Naive thymus-derived CD4-positive, alpha-beta T cell (primary cell): ENCODE measurements at regions of chr11 and their contacts with region 1.

Region 1: GRCh38 chr11:72085621-72086351 is 5.1 kb downstream of the LRRC51 start:
- DNase-seq: no peak
- ATAC-seq: no peak
- H3K4me3 ChIP-seq: no peak overlapping the region
- H3K4me3 Mint-ChIP-seq: no peak overlapping the region
- H3K27ac ChIP-seq: no peak overlapping the region
- H3K27ac Mint-ChIP-seq: peak overlapping the region in 8 of 9 donors; percentile 58 to 83 (median 76)
- H3K4me1 ChIP-seq: peaks cover 0 to 9% of the 10 kb centered on the region in 2 donors
- H3K4me1 Mint-ChIP-seq: peaks cover 12 to 33% (median 24%) of the 10 kb centered on the region in 7 donors
- H3K27me3 ChIP-seq: no peaks in the 10 kb centered on the region
- H3K27me3 Mint-ChIP-seq: no peaks in the 10 kb centered on the region

Region 2: GRCh38 chr11:72102946-72103753 is 17.4 kb after region 1 on chr11 and contains the start of gene LAMTOR1:
- CTCF ChIA-PET with region 1: interaction called, 18 read pairs
- POLR2A ChIA-PET with region 1: interaction called, 25 read pairs
- intact Hi-C with region 1: loop called (anchors 1 kb)
- DNase-seq: peak; percentile 87 to 98 (median 95)
- ATAC-seq: peak; percentile 98
- H3K4me3 ChIP-seq: peak within 1 kb of the TSS; percentile 54
- H3K4me3 Mint-ChIP-seq: peak within 1 kb of the TSS; percentile 66 to 97 (median 86)
- H3K27ac ChIP-seq: peak within 1 kb of the TSS; percentile 93
- H3K27ac Mint-ChIP-seq: peak within 1 kb of the TSS; percentile 83 to 98 (median 94)
- H3K4me1 ChIP-seq: peaks cover 20% of the 10 kb centered on the region in 2 donors
- H3K4me1 Mint-ChIP-seq: peaks cover 37 to 49% (median 44%) of the 10 kb centered on the region in 7 donors
- H3K27me3 ChIP-seq: no peaks in the 10 kb centered on the region
- H3K27me3 Mint-ChIP-seq: no peaks in the 10 kb centered on the region
- total RNA-seq, gene LAMTOR1: 41.8 to 83.0 (median 69.7) TPM

Region 3: GRCh38 chr11:72157126-72157525 is 71.3 kb after region 1 on chr11:
- CTCF ChIA-PET with region 1: no interaction called
- POLR2A ChIA-PET with region 1: no interaction called
- intact Hi-C with region 1: no loop called
- DNase-seq: no peak
- ATAC-seq: no peak
- H3K4me3 ChIP-seq: no peak overlapping the region
- H3K4me3 Mint-ChIP-seq: no peak overlapping the region
- H3K27ac ChIP-seq: no peak overlapping the region
- H3K27ac Mint-ChIP-seq: no peak overlapping the region
- H3K4me1 ChIP-seq: no peaks in the 10 kb centered on the region
- H3K4me1 Mint-ChIP-seq: no peaks in the 10 kb centered on the region
- H3K27me3 ChIP-seq: no peaks in the 10 kb centered on the region
- H3K27me3 Mint-ChIP-seq: peaks cover 13 to 28% (median 15%) of the 10 kb centered on the region in 5 donors

Region 4: GRCh38 chr11:72573072-72573854 is 487.5 kb after region 1 on chr11:
- CTCF ChIA-PET with region 1: no interaction called
- POLR2A ChIA-PET with region 1: no interaction called
- intact Hi-C with region 1: no loop called
- DNase-seq: peak in 3 of 9 donors; percentile 7 to 29 (median 16)
- ATAC-seq: peak; percentile 73
- H3K4me3 ChIP-seq: no peak overlapping the region
- H3K4me3 Mint-ChIP-seq: peak overlapping the region in 1 of 10 donors; percentile 8
- H3K27ac ChIP-seq: no peak overlapping the region
- H3K27ac Mint-ChIP-seq: peak overlapping the region in 1 of 9 donors; percentile 11
- H3K4me1 ChIP-seq: no peaks in the 10 kb centered on the region
- H3K4me1 Mint-ChIP-seq: peaks cover 0 to 18% (median 0%) of the 10 kb centered on the region in 7 donors
- H3K27me3 ChIP-seq: no peaks in the 10 kb centered on the region
- H3K27me3 Mint-ChIP-seq: peaks cover 5 to 19% (median 13%) of the 10 kb centered on the region in 5 donors

Region 5: DNA sequence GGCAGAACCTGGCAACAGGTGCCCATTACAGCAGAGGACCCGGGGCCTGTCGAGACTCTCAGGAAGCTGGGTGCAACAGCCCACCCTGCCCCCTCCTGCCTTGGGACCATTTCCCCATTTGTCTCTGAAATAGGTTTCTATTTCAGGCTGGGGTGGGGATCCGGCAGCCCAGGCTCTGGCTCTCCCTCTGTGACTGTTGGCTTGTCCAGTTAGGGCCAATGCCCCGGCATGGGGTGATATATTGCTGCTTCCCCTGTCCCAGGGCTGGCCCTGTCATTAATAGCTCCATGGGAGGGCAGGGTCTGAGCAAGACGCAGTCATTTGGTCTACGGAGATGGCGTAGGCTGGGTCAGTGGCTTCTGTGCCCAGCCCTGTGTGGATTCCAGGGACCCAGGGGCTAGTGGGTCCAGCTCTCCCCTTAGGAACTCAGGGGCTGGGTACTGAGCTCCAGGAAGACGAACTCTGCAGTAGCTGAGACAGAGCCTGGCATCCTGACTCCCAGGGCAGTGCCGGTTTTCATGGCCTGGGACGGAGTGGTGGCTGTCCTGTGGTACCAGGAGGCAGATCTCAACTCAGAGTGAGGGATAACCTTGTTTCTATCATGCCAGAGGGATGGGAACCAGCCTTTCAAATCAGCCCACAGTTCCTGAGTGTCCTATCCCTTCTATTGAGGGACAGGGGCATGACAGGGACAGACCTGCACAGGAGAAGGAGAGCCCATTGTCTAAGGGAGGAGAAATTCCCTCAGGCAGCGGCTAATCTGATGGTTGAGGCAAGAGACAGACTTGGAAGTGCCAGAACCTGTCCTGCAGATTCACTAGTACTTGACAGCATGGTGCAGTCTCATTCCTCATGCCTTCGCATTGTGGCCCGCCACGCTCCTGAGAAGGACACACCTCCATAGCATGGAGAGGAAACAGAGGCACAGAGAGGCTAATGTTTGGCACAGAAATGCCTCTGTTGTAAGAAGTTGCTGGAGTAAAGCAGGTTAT is 1189.3 kb after region 1 on chr11:
- CTCF ChIA-PET with region 1: no interaction called
- POLR2A ChIA-PET with region 1: no interaction called
- intact Hi-C with region 1: no loop called
- DNase-seq: no peak
- ATAC-seq: peak; percentile 28
- H3K4me3 ChIP-seq: no peak overlapping the region
- H3K4me3 Mint-ChIP-seq: no peak overlapping the region
- H3K27ac ChIP-seq: no peak overlapping the region
- H3K27ac Mint-ChIP-seq: no peak overlapping the region
- H3K4me1 ChIP-seq: no peaks in the 10 kb centered on the region
- H3K4me1 Mint-ChIP-seq: peaks cover 0 to 1% (median 0%) of the 10 kb centered on the region in 7 donors
- H3K27me3 ChIP-seq: no peaks in the 10 kb centered on the region
- H3K27me3 Mint-ChIP-seq: peaks cover 0 to 36% (median 0%) of the 10 kb centered on the region in 5 donors